Ascending aorta (tissue), 2 donors: ENCODE measurements at regions of chr5 and their contacts with region 1.

Region 1: GRCh38 chr5:134552301-134552700 is 26.8 kb downstream of the JADE2 start:
- DNase-seq: peak in 1 of 2 donors; percentile 95
- H3K4me3 ChIP-seq: peak overlapping the region in 1 of 2 donors; percentile 6
- H3K27ac ChIP-seq: peak overlapping the region; percentile 88 to 93
- H3K4me1 ChIP-seq: peaks cover 22 to 82% of the 10 kb centered on the region in 2 donors
- H3K27me3 ChIP-seq: no peaks in the 10 kb centered on the region
- CTCF ChIP-seq: no peak

Region 2: DNA sequence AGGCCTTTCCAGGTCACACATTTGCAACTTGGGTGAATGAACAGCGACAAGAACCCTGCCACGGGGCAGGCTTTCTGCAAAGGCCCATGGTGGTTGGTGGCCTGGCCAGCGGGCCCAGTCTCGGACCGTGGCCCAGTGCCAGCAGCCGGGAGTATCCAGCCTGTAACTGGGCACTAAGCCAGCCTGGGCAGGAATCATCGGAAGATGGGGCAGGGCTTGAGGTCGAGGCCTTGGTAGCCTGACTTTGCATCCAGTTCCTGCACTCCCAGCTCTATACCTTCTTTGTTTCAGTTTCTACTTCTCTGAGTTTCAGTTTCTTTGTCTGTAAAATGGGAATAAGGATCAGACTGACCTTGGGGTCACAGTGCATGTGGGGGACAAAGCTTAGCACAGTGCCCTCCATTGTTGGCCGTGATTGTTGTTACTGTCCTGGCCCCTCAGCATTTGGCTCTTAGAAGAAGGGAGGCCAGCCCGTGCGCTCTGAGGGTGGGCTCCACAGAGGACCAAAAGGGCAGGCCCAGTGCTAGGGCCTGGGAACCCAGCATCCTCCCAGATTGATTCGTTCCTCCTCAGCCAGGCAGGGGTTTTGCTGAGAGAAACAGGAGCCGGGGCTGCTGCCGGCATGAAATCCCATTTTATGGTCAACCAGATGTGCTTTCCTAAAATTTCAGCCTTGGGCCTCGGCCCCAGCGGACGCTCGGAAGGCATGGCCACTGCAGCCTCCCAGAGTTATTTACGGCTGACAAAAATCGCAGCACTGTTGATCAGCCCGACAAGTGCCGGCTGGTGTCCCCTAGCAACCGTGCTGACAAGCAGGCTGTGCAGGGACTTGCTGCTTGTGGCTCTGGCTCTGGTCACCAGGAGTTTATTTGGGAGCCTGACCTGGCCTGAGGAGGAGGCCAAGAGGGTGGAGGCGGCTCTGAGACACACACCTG is 16.7 kb after region 1 on chr5:
- intact Hi-C with region 1: loop called (anchors 2 kb)
- DNase-seq: peak in 1 of 2 donors; percentile 86
- H3K4me3 ChIP-seq: no peak overlapping the region
- H3K27ac ChIP-seq: peak overlapping the region; percentile 54 to 78
- H3K4me1 ChIP-seq: peaks cover 0 to 35% of the 10 kb centered on the region in 2 donors
- H3K27me3 ChIP-seq: no peaks in the 10 kb centered on the region
- CTCF ChIP-seq: no peak